ENCODE measurements at regions of chr12 and their contacts with region 1.

Region 1: GRCh38 chr12:955939-956338 is 6.4 kb upstream of the RAD52 start:
- DNase-seq: no peak
- ATAC-seq: no peak

Region 2: DNA sequence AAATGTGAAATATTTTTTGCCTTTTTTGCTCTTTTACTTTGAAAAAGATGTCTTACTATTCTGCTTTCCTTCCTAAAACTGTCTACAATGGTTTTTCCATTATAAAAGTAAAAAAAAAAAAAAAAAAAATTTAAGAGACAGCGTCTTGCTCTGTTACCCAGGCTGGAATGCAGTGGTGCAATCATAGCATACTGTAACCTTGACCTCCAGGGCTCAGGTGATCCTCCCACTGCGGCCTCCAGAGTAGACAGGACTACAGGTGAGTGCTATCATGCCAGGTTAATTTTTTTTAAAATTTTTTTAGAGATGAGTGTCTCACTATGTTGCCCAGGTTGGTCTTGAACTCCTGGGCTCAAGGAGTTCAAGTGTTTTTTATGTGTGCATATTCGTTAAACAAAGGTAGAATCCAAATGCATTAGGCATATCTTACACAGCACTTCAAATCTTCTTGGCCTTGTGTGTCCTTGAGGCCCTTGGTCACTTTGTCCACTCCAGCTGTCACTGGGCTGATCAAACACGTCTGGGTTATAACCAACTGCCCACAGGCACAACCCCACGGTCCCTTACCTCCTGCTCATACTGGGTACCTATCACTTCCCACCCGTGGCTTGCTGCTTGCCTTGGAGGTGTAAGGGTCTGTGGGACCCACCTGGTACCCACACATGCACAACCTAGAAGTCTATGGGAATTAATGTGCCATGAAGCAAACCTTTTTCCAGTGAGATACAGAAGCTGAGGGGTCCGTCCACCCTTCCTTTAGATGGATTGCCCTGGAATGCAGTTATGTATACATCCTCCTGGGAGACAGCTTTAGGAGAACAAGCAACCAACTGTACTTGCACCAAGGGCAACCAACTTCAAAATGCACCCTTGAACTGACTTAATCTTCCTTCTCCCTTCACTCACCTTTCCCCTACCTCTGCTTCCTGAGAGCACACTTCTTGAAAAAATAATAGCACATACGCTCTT is 19.3 kb before region 1 on chr12:
- intact Hi-C with region 1: no loop called
- DNase-seq: no peak
- ATAC-seq: no peak

Region 3: DNA sequence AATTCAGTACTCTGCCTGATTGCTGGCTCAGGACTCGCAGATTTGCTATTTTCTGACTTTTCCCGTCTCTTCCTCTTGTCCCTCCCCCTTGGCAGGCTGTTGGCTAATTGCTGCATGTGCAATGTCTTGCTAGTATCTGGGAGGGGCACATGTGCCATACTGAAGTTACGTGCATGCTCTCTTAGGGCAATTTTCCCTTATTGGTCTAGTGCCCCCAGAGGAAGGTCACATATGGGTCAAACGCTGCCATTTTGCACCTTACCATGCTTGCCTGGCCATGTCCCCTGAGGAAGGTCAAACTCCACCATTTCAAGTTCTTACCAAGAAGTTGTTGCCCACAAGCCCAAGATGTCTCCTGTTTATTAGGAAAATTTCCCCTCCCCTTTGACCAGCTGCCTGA is 21.2 kb after region 1 on chr12:
- intact Hi-C with region 1: loop called (anchors 2 kb)
- DNase-seq: no peak
- ATAC-seq: no peak

Region 4: DNA sequence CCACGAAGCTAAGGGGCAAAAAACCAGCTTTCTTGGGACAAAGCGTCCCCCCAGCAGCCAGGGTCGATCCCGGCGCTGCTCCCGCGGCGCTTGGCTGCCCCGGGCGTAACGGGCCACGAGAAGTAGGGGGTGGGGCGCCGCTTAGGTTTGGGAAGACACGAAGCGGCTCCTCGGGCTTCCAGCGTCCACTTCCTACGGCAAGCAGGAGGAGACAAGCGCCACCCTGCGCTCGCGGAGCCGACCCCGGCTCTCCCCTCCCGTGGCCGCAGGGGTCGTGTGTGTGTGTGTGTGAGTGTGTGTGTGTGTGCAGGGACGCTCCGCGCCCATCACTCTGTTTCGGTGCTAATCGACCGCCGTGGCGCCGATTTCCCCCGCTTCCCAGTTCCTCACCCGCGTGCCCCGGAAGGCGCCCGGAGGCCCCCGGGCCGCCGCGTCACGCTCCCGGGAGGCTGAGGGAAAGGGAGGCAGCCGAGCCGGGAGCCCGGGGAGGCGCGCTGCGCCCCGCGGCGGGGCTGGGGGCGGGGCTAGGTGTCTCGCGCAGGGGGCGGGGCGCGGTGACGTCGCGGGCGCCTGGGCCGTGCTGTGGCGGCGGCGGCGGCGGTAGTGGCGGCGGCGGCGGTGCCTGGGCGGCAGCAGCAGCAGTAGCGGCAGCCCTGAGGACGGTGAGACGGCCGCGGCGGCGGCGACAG is 34.9 kb after region 1 on chr12 and contains the start of gene ERC1:
- intact Hi-C with region 1: no loop called
- DNase-seq: peak; percentile 92
- ATAC-seq: peak; percentile 97
- total RNA-seq, gene ERC1: 83.5 TPM